ENCODE measurements at regions of chr1 and their contacts with region 1.

Region 1: DNA sequence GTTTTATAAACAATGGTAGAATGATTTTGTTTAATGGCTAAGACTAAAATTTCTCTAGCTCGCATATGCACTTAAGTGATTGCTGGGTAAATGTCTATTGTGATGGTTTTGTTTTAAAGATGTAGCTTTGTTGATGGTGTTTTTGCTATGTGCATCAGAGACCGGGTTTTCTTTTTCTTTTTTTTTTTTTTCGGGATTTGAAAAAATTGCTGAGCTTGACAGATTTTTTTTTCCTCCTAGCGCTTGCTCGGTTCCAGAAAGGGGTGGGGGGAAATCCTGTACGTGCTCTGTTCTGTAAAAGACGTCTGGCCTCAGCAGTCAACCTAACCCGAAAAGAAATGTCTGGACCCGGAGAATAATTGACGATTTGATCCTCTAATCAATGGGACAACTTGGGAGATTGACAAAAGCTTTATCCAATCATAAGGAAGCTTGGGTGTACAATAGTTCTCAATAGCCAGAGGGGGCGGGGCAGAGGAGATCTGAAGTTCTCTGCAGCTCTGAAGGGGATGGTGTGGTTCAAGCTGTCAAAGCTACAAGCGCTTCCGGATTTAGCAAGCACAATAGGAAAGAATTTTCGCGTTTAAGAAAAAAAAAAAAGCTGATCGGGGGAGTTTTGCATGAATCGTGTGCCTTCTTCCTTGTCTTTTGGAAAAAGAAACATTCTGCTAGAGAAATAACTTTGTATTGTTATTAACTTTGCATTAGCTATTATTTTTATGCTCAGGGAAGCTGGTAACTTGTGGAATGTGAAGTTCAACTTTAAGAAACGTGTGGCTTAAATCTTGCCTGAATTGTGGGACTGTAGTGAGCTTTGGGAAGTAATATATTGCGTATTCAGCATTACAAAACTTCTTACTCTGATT is 4.5 kb upstream of the NFIA start:
- DNase-seq: peak; percentile 93 to 97 (median 94)
- ATAC-seq: peak; percentile 85 to 89
- H3K4me3 ChIP-seq: peak overlapping the region; percentile 91
- H3K27ac ChIP-seq: peak overlapping the region; percentile 62
- H3K4me1 ChIP-seq: peaks cover 8% of the 10 kb centered on the region
- H3K27me3 ChIP-seq: no peaks in the 10 kb centered on the region

Region 2: GRCh38 chr1:61184040-61184713 is 106.3 kb after region 1 on chr1:
- intact Hi-C with region 1: loop called in 3 of 4 experiments (anchors 5 to 10 kb)
- DNase-seq: peak; percentile 95 to 98 (median 97)
- ATAC-seq: peak; percentile 93 to 96
- H3K4me3 ChIP-seq: peak overlapping the region; percentile 72
- H3K27ac ChIP-seq: peak overlapping the region; percentile 97
- H3K4me1 ChIP-seq: peaks cover 15% of the 10 kb centered on the region
- H3K27me3 ChIP-seq: no peaks in the 10 kb centered on the region

Region 3: DNA sequence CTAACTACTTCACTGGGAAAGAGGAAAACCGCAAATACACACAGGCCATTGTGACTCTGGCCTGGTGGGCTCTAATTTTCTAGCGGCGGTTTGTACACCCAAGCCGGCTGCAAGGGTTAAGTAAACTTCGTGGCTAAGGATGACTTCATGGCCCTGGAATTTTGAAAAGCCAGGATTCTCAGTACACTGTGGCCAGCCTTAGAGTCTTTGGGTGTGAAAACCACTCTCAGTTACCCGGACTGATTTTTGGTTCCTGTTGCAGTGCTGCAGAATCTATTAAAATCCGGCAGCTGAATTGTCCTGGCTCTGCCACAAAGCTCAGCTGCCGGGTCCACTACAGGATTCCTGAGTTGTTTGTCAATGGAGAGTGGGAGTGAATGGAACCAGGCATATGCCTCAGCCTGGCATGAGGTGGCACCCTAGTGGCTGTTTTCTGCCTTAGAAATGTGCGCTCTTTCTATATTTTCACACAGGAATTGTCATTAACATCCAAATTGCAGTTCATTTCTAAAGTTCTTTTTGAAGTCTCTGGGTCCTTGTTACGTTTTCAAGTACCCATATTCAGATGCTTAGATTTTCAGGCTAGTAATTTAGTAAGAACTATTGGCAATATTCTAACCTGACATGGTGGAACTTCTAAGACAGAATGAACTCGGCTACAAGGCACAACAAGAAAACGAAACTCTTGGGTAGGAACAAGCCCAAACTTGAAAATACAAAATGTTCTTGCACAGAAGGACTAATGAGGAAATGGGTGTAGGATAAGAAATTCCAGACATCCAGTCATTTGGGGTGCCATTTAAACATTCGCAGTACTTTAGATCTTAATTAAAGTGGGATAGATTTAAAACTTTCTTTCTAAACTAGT is 260.3 kb after region 1 on chr1:
- intact Hi-C with region 1: loop called in 2 of 4 experiments (anchors 10 kb)
- DNase-seq: peak; percentile 69 to 87 (median 78)
- ATAC-seq: peak; percentile 90 to 91
- H3K4me3 ChIP-seq: peak overlapping the region; percentile 20
- H3K27ac ChIP-seq: peak overlapping the region; percentile 99
- H3K4me1 ChIP-seq: peaks cover 22% of the 10 kb centered on the region
- H3K27me3 ChIP-seq: no peaks in the 10 kb centered on the region

Region 4: DNA sequence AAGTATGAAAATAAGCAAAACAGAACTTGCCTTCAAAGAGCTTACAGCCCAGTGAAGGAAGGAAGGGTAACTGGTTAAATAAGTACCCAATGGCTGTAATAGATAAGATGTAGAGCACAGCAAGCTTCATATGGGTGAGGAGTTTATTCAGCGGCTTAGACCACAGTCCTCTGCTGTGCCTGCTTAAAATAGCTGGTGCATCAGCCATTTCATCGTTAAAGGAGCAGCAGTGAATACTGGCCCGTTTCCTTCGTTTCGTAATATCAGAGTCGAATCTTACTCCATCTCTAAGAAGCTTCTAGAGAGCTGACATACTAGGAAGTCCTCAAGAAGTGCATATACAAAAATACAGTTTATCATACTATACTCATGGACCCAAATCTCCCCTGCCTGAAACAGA is 291.0 kb after region 1 on chr1:
- intact Hi-C with region 1: no loop called
- DNase-seq: no peak
- ATAC-seq: peak; percentile 64 to 76
- H3K4me3 ChIP-seq: no peak overlapping the region
- H3K27ac ChIP-seq: peak overlapping the region; percentile 19
- H3K4me1 ChIP-seq: no peaks in the 10 kb centered on the region
- H3K27me3 ChIP-seq: no peaks in the 10 kb centered on the region